GM12878 (cell line): ENCODE measurements at regions of chr2 and their contacts with region 1.

Region 1: GRCh38 chr2:121722479-121722878 is 14.2 kb downstream of the NIFK start:
- DNase-seq: no peak
- ATAC-seq: no peak
- H3K4me3 ChIP-seq: no peak overlapping the region
- H3K27ac ChIP-seq: no peak overlapping the region
- H3K4me1 ChIP-seq: no peaks in the 10 kb centered on the region
- H3K27me3 ChIP-seq: no peaks in the 10 kb centered on the region
- CTCF ChIP-seq: no peak
- EP300 ChIP-seq: no peak
- POLR2A ChIP-seq: no peak
- RAD21 ChIP-seq: no peak

Region 2: GRCh38 chr2:121400201-121400600 is 322.3 kb before region 1 on chr2:
- CTCF ChIA-PET with region 1: interaction called, 62 read pairs
- POLR2A ChIA-PET with region 1: interaction called, 3 read pairs
- RAD21 ChIA-PET with region 1: interaction called, 12 read pairs
- SMC1A ChIA-PET with region 1: interaction called, 14 read pairs
- in situ Hi-C with region 1: loop called (anchors 5 kb)
- intact Hi-C with region 1: loop called (anchors 1 kb)
- DNase-seq: no peak
- ATAC-seq: no peak
- H3K4me3 ChIP-seq: no peak overlapping the region
- H3K27ac ChIP-seq: no peak overlapping the region
- H3K4me1 ChIP-seq: no peaks in the 10 kb centered on the region
- H3K27me3 ChIP-seq: no peaks in the 10 kb centered on the region
- CTCF ChIP-seq: no peak
- EP300 ChIP-seq: no peak
- POLR2A ChIP-seq: no peak
- RAD21 ChIP-seq: no peak

Region 3: GRCh38 chr2:121405233-121405632 is 317.2 kb before region 1 on chr2:
- CTCF ChIA-PET with region 1: interaction called, 62 read pairs
- POLR2A ChIA-PET with region 1: interaction called, 3 read pairs
- RAD21 ChIA-PET with region 1: interaction called, 12 read pairs
- SMC1A ChIA-PET with region 1: interaction called, 14 read pairs
- in situ Hi-C with region 1: no loop called
- intact Hi-C with region 1: loop called (anchors 1 kb)
- DNase-seq: no peak
- ATAC-seq: no peak
- H3K4me3 ChIP-seq: no peak overlapping the region
- H3K27ac ChIP-seq: no peak overlapping the region
- H3K4me1 ChIP-seq: no peaks in the 10 kb centered on the region
- H3K27me3 ChIP-seq: no peaks in the 10 kb centered on the region
- CTCF ChIP-seq: no peak
- EP300 ChIP-seq: no peak
- POLR2A ChIP-seq: no peak
- RAD21 ChIP-seq: no peak

Region 4: DNA sequence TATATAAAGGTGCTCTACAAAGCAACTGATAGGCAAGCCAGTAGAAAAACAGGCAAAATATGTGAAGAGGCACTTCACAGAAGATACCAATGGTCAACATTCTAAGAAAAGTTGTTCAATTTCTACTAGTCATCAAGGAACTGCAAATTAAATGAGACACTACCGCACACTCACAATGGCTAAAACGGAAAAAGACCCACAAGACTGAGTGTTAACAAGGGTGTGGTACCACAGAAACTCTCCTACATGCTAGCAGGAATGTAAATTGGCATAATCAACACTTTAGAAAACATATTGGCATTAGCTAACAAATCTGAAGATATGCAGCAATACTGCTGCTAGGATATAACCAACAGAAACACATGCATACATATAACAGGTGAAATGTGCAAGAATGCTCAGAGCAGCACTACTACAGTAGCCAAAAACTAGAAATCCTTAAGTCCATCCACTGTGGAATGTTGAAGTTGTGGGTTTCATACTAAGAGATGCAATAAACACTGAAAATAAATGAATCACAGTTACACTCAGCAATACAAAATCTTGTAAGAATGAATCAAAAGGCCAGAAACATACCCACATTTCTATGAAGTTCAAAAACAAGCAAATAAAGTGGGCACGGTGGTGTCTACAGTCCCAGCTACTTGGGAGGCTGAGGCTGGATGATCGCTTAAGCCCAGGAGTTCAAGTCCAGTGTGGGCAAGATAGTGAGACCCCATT is 182.6 kb before region 1 on chr2:
- CTCF ChIA-PET with region 1: interaction called, 4 read pairs
- POLR2A ChIA-PET with region 1: no interaction called
- RAD21 ChIA-PET with region 1: no interaction called
- SMC1A ChIA-PET with region 1: interaction called, 4 read pairs
- in situ Hi-C with region 1: loop called (anchors 5 kb)
- intact Hi-C with region 1: no loop called
- DNase-seq: no peak
- ATAC-seq: peak; percentile 34
- H3K4me3 ChIP-seq: 0 out of 2 replicates have a peak overlapping the region, but pooled peaks have one; percentile 53
- H3K27ac ChIP-seq: peak overlapping the region; percentile 16
- H3K4me1 ChIP-seq: peaks cover 10% of the 10 kb centered on the region
- H3K27me3 ChIP-seq: no peaks in the 10 kb centered on the region
- CTCF ChIP-seq: no peak
- EP300 ChIP-seq: no peak
- POLR2A ChIP-seq: no peak
- RAD21 ChIP-seq: no peak

Region 5: GRCh38 chr2:121649596-121650314 is 72.7 kb before region 1 on chr2:
- CTCF ChIA-PET with region 1: interaction called, 5 read pairs
- POLR2A ChIA-PET with region 1: no interaction called
- RAD21 ChIA-PET with region 1: interaction called, 4 read pairs
- SMC1A ChIA-PET with region 1: no interaction called
- in situ Hi-C with region 1: no loop called
- intact Hi-C with region 1: loop called (anchors 5 kb)
- DNase-seq: peak; percentile 89
- ATAC-seq: peak; percentile 95
- H3K4me3 ChIP-seq: peak overlapping the region; percentile 98
- H3K27ac ChIP-seq: peak overlapping the region; percentile 95
- H3K4me1 ChIP-seq: no peaks in the 10 kb centered on the region
- H3K27me3 ChIP-seq: no peaks in the 10 kb centered on the region
- CTCF ChIP-seq: no peak
- EP300 ChIP-seq: 0 out of 4 replicates have a peak, but pooled peaks have one; percentile 4 to 19
- POLR2A ChIP-seq: peak; percentile 74
- RAD21 ChIP-seq: 0 out of 2 replicates have a peak, but pooled peaks have one; percentile 1